CD4-positive, alpha-beta T cell (primary cell): ENCODE measurements at regions of chr17 and their contacts with region 1.

Region 1: GRCh38 chr17:38702166-38702899 is 2.7 kb upstream of the MLLT6 start:
- DNase-seq: peak; percentile 62 to 92 (median 76)
- ATAC-seq: peak; percentile 33
- H3K4me3 ChIP-seq: peak overlapping the region; percentile 73
- H3K4me3 Mint-ChIP-seq: peak overlapping the region; percentile 95
- H3K27ac ChIP-seq: peak overlapping the region; percentile 94 to 97
- H3K27ac Mint-ChIP-seq: peak overlapping the region; percentile 88
- H3K4me1 ChIP-seq: peaks cover 61% of the 10 kb centered on the region
- H3K4me1 Mint-ChIP-seq: peaks cover 50% of the 10 kb centered on the region
- H3K27me3 ChIP-seq: no peaks in the 10 kb centered on the region
- H3K27me3 Mint-ChIP-seq: no peaks in the 10 kb centered on the region
- CTCF ChIP-seq: no peak

Region 2: DNA sequence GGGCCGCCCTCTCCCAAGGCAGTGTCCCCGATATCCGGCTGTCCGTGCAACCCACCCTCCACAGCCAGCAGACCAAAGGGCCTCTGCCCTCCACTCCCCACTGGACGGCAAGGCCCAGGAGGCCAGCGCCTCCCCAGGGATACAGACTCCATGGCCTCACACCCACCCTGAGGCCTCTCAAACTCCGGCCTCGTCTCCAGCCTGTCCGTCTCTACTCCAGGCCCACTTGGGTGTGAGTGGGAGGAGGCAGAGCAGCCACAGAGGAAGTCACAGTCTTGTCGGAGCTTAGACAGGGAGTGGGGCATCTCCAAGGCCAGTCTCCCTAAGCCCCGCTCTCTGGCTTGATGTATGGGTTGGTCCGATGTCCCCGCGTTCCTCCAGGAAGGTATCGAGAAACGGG is 169.9 kb before region 1 on chr17:
- CTCF ChIA-PET with region 1: no interaction called
- POLR2A ChIA-PET with region 1: no interaction called
- intact Hi-C with region 1: no loop called
- DNase-seq: no peak
- ATAC-seq: no peak
- H3K4me3 ChIP-seq: no peak overlapping the region
- H3K4me3 Mint-ChIP-seq: no peak overlapping the region
- H3K27ac ChIP-seq: no peak overlapping the region
- H3K27ac Mint-ChIP-seq: no peak overlapping the region
- H3K4me1 ChIP-seq: no peaks in the 10 kb centered on the region
- H3K4me1 Mint-ChIP-seq: no peaks in the 10 kb centered on the region
- H3K27me3 ChIP-seq: peaks cover 0 to 8% of the 10 kb centered on the region in 2 experiments
- H3K27me3 Mint-ChIP-seq: peaks cover 37% of the 10 kb centered on the region
- CTCF ChIP-seq: no peak

Region 3: GRCh38 chr17:38660097-38661025 is 42.0 kb before region 1 on chr17:
- CTCF ChIA-PET with region 1: no interaction called
- POLR2A ChIA-PET with region 1: no interaction called
- intact Hi-C with region 1: no loop called
- DNase-seq: no peak
- ATAC-seq: no peak
- H3K4me3 ChIP-seq: no peak overlapping the region
- H3K4me3 Mint-ChIP-seq: no peak overlapping the region
- H3K27ac ChIP-seq: no peak overlapping the region
- H3K27ac Mint-ChIP-seq: no peak overlapping the region
- H3K4me1 ChIP-seq: no peaks in the 10 kb centered on the region
- H3K4me1 Mint-ChIP-seq: peaks cover 6% of the 10 kb centered on the region
- H3K27me3 ChIP-seq: peaks cover 4 to 10% of the 10 kb centered on the region in 2 experiments
- H3K27me3 Mint-ChIP-seq: peaks cover 48% of the 10 kb centered on the region
- CTCF ChIP-seq: no peak

Region 4: GRCh38 chr17:38674749-38675615 is 27.4 kb before region 1 on chr17 and contains the start of gene EPOP:
- CTCF ChIA-PET with region 1: interaction called, 10 read pairs
- POLR2A ChIA-PET with region 1: interaction called, 9 read pairs
- intact Hi-C with region 1: loop called (anchors 1 to 2 kb)
- DNase-seq: peak; percentile 47 to 92 (median 80)
- ATAC-seq: peak; percentile 80
- H3K4me3 ChIP-seq: peak within 1 kb of the TSS; percentile 38
- H3K4me3 Mint-ChIP-seq: peak within 1 kb of the TSS; percentile 75
- H3K27ac ChIP-seq: no peak within 1 kb of the TSS
- H3K27ac Mint-ChIP-seq: no peak within 1 kb of the TSS
- H3K4me1 ChIP-seq: peaks cover 37% of the 10 kb centered on the region
- H3K4me1 Mint-ChIP-seq: peaks cover 24% of the 10 kb centered on the region
- H3K27me3 ChIP-seq: peaks cover 26 to 34% of the 10 kb centered on the region in 2 experiments
- H3K27me3 Mint-ChIP-seq: peaks cover 54% of the 10 kb centered on the region
- CTCF ChIP-seq: no peak
- total RNA-seq, gene EPOP: 0.16 to 0.34 TPM

Region 5: GRCh38 chr17:38719943-38720641 is 17.8 kb after region 1 on chr17:
- CTCF ChIA-PET with region 1: no interaction called
- POLR2A ChIA-PET with region 1: interaction called, 42 read pairs
- intact Hi-C with region 1: no loop called
- DNase-seq: peak in 2 of 14 experiments; percentile 20 to 36
- ATAC-seq: no peak
- H3K4me3 ChIP-seq: no peak overlapping the region
- H3K4me3 Mint-ChIP-seq: no peak overlapping the region
- H3K27ac ChIP-seq: no peak overlapping the region
- H3K27ac Mint-ChIP-seq: no peak overlapping the region
- H3K4me1 ChIP-seq: peaks cover 59% of the 10 kb centered on the region
- H3K4me1 Mint-ChIP-seq: peaks cover 28% of the 10 kb centered on the region
- H3K27me3 ChIP-seq: no peaks in the 10 kb centered on the region
- H3K27me3 Mint-ChIP-seq: no peaks in the 10 kb centered on the region
- CTCF ChIP-seq: no peak

Region 6: GRCh38 chr17:38742411-38743308 is 40.3 kb after region 1 on chr17:
- CTCF ChIA-PET with region 1: no interaction called
- POLR2A ChIA-PET with region 1: no interaction called
- intact Hi-C with region 1: no loop called
- DNase-seq: peak in 1 of 14 experiments; percentile 38
- ATAC-seq: peak; percentile 32
- H3K4me3 ChIP-seq: no peak overlapping the region
- H3K4me3 Mint-ChIP-seq: no peak overlapping the region
- H3K27ac ChIP-seq: no peak overlapping the region
- H3K27ac Mint-ChIP-seq: no peak overlapping the region
- H3K4me1 ChIP-seq: peaks cover 13% of the 10 kb centered on the region
- H3K4me1 Mint-ChIP-seq: peaks cover 12% of the 10 kb centered on the region
- H3K27me3 ChIP-seq: peaks cover 22 to 26% of the 10 kb centered on the region in 2 experiments
- H3K27me3 Mint-ChIP-seq: peaks cover 30% of the 10 kb centered on the region
- CTCF ChIP-seq: no peak